Mammary epithelial cell (primary cell): ENCODE measurements at regions of chr2 and their contacts with region 1.

Region 1: GRCh38 chr2:231961349-231962166 is at the start of gene DIS3L2:
- DNase-seq: peak; percentile 80
- H3K4me3 ChIP-seq: peak within 1 kb of the TSS; percentile 84 to 95 (median 89)
- H3K27ac ChIP-seq: peak within 1 kb of the TSS; percentile 41
- H3K4me1 ChIP-seq: peaks cover 7% of the 10 kb centered on the region
- H3K27me3 ChIP-seq: no peaks in the 10 kb centered on the region
- CTCF ChIP-seq: no peak
- total RNA-seq, gene DIS3L2: 29.3 to 29.7 TPM

Region 2: DNA sequence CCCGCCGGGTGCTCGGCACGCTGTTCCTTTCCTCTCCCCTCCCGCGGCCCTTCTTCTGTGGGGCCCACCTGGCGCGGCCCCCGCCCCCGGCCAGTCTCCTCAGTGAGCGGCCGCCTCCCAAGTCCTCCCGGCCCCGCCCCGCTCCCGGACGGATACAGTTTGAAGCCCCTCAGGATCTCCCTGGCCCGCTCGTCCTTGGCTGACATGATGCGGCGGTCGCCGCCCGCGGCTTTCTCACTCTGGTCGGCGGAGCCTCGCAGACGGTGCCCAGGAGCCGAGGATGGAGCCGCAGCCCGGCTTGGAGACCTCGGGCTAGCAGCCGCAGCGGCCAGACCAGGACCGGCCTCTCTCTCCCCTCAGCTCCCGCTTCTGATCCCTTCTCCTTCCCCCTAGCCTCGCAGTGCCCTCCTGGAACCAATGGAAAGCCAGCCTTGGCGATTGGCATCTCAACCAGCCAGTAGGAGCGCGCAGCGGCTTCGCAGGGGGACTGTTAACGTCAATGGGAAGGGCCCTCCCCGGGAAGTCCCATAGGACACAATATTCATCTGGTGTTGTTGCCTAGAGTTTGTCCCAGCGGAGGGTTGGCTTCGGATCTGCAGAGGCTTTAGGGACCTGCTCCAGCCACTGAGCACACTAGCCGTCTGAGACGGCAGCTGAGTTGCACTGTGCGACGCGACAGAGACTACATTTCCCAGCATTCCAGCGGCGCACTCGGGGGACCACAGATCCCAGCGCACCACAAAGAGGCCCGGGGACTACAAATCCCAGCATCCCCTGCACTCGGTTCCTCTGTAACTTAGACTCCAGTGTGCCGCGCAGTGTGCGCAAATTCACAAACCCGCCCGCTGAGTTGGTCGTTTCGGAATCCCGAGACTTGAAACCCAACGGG is 180.4 kb before region 1 on chr2 and contains the start of gene PDE6D:
- CTCF ChIA-PET with region 1: no interaction called
- dilution Hi-C with region 1: no loop called
- in situ Hi-C with region 1: no loop called
- intact Hi-C with region 1: no loop called
- DNase-seq: peak; percentile 100
- H3K4me3 ChIP-seq: peak within 1 kb of the TSS; percentile 65 to 95 (median 69)
- H3K27ac ChIP-seq: peak within 1 kb of the TSS; percentile 50
- H3K4me1 ChIP-seq: peaks cover 15% of the 10 kb centered on the region
- H3K27me3 ChIP-seq: no peaks in the 10 kb centered on the region
- CTCF ChIP-seq: no peak
- total RNA-seq, gene PDE6D: 15.2 to 16.2 TPM

Region 3: DNA sequence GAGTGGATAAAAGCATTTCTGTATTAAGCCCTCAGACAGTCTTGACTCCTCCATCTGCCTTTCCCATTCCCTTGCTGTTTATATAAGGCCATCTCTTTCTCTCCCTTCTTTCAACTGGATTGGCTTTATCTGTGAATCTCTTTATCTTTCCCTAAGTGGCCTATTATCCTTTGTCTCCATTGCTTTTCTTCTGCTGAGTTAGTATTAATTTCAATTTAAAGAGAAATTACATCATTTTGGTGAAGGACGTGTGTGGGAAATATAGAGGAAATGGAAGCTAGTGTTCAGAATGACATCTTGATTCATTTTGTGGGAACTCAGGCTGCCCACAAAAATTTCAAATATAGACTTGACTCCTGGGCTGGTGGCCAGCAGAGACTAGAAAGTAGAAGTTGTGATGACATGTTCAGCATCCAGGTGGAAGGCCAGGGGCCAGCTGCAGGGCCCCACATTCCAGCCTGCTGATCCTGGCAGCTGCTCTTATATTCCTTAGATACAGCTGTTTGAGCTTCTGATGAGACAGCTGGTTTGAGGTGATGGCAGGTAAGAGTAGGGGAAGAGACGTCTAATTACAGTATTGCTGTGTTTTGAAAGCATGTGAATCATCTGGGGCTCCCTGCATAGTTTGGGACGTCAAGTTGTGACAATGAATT is 52.3 kb after region 1 on chr2:
- CTCF ChIA-PET with region 1: no interaction called
- dilution Hi-C with region 1: no loop called
- in situ Hi-C with region 1: no loop called
- intact Hi-C with region 1: loop called (anchors 5 kb)
- DNase-seq: peak; percentile 93
- H3K4me3 ChIP-seq: no peak overlapping the region
- H3K27ac ChIP-seq: no peak overlapping the region
- H3K4me1 ChIP-seq: peaks cover 20% of the 10 kb centered on the region
- H3K27me3 ChIP-seq: no peaks in the 10 kb centered on the region
- CTCF ChIP-seq: no peak